ENCODE measurements at regions of chr9 and their contacts with region 1.

Region 1: GRCh38 chr9:132249123-132249522 is 87.3 kb downstream of the NTNG2 start:
- DNase-seq: no peak
- ATAC-seq: no peak
- H3K4me3 Mint-ChIP-seq: no peak overlapping the region
- H3K27ac Mint-ChIP-seq: no peak overlapping the region
- H3K4me1 Mint-ChIP-seq: peaks cover 5% of the 10 kb centered on the region
- H3K27me3 Mint-ChIP-seq: no peaks in the 10 kb centered on the region
- CTCF ChIP-seq: no peak

Region 2: DNA sequence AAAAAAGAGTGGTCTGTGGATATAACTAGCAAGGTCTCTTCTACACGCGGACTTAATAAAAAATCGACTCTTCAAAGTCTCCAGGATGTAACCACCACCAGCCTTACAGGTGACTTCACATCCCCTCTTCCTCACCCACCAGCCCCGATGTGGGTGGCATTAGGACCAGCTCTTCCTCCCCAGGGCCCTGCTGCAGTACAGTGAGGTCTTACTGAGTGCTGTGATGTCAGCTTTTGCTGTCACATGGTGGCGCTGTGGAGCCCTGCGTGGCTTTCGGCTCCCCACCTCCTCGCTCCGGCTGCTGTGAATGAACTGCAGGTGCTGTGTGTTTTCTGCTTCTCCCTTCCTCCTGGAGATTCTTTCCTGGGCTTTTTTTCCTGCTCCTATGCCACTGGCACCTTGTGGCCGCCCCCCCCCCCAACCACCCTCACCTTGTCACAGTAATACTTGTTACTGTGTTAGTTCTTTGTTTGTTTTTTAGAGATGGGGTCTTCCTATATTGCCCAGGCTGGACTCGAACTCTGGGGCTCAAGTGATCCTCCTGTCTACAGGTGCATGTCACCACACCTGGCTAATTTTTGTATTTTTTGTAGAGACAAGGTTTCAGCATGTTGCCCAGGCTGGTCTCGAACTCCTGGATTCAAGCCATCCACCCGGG is 493.5 kb before region 1 on chr9:
- CTCF ChIA-PET with region 1: interaction called, 27 read pairs
- POLR2A ChIA-PET with region 1: interaction called, 14 read pairs
- intact Hi-C with region 1: no loop called
- DNase-seq: peak; percentile 77
- ATAC-seq: peak; percentile 100
- H3K4me3 Mint-ChIP-seq: no peak overlapping the region
- H3K27ac Mint-ChIP-seq: peak overlapping the region; percentile 32
- H3K4me1 Mint-ChIP-seq: peaks cover 5% of the 10 kb centered on the region
- H3K27me3 Mint-ChIP-seq: peaks cover 7% of the 10 kb centered on the region
- CTCF ChIP-seq: no peak

Region 3: DNA sequence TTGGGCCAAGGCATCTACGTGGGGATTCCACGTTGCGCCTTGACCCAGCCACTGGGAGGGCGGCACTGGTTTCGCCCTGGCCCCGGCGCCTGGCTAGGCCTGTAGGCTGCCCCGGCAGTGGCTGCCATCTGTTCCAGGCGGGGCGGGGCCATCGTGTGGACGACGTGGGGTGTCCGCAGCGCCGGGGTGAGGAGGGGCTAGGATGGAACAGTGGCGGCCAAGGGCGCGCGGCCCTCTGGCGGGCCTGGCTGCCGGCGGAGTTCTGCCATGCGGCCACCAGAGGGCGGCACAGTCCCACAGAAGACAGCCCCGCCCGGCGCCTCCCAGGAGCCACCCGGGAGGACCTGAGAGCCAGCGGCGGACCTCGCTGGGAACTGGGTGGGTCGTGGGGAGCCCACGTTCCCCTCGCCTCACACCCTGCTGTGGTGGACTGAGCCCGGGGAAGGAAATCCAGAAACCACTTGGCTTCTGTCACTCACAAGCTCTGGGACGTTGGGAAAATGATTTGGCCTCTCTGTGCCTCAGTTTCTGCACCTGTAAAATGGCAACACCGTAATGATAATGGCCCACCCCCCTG is 486.7 kb before region 1 on chr9:
- CTCF ChIA-PET with region 1: interaction called, 58 read pairs
- POLR2A ChIA-PET with region 1: interaction called, 14 read pairs
- intact Hi-C with region 1: loop called (anchors 1 kb)
- DNase-seq: peak; percentile 79
- ATAC-seq: peak; percentile 98
- H3K4me3 Mint-ChIP-seq: no peak overlapping the region
- H3K27ac Mint-ChIP-seq: no peak overlapping the region
- H3K4me1 Mint-ChIP-seq: no peaks in the 10 kb centered on the region
- H3K27me3 Mint-ChIP-seq: peaks cover 15% of the 10 kb centered on the region
- CTCF ChIP-seq: peak; percentile 66

Region 4: DNA sequence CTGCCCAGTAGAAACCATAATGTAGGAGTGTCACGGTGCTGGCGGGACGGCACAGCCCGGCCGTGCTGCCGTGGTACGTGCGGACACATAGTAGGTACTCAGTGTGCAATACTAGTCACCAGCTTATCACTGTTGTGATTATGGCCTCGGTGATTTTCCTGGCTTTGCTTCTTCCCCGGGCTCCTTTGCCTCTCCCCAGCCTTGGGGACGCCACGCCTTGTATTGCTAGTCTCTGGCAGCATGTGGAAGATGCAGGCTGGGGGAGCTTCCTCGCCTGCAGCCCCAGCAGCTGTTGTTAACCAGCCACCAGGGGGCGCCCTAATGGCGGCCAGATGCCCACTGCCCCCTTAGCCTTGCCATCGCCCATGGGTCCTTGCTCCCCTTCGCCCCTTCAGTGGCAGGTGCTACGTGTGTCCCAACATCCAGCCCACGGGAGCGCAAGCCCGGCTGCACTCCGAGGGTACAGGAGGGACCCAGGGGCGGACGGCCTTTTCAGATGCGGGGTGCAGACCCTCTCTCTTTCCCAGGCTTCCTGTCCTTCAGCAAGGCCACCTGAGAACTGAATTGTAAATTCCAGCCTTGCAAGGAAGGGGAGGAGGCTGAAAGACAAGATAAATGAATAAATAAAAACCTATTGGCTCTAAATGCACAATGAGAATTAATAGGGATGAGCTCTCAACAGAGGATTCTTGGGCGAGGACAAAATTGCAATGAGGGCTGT is 79.3 kb before region 1 on chr9:
- CTCF ChIA-PET with region 1: interaction called, 52 read pairs
- POLR2A ChIA-PET with region 1: no interaction called
- intact Hi-C with region 1: loop called (anchors 1 kb)
- DNase-seq: peak; percentile 59
- ATAC-seq: peak; percentile 54
- H3K4me3 Mint-ChIP-seq: no peak overlapping the region
- H3K27ac Mint-ChIP-seq: no peak overlapping the region
- H3K4me1 Mint-ChIP-seq: no peaks in the 10 kb centered on the region
- H3K27me3 Mint-ChIP-seq: peaks cover 52% of the 10 kb centered on the region
- CTCF ChIP-seq: peak; percentile 53

Region 5: DNA sequence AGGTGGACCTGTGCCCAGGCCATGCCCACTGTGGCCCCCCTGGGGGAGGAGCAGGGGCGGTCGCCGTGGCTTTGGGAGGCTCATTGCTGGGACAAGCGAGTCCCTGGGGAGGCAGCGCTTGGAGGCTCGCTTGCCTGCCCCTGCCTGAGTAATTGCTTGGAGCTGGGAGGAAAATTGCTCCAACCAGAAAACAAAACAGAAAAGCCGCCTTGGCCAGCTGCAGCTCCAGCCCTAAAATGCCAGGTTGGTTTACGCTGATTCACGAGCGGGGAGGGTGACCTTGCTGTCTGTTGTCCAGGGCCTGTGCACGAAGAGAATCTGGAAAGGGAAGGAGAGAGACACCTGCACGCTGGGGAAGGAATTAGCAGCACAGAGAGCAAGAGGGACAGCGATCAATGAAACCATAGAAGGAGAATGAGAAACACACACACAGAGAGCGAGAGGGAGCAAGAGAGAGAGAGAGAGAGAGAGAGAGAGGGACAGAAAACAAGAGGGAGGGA is 62.0 kb before region 1 on chr9:
- CTCF ChIA-PET with region 1: no interaction called
- POLR2A ChIA-PET with region 1: no interaction called
- intact Hi-C with region 1: no loop called
- DNase-seq: no peak
- ATAC-seq: no peak
- H3K4me3 Mint-ChIP-seq: no peak overlapping the region
- H3K27ac Mint-ChIP-seq: no peak overlapping the region
- H3K4me1 Mint-ChIP-seq: peaks cover 5% of the 10 kb centered on the region
- H3K27me3 Mint-ChIP-seq: peaks cover 25% of the 10 kb centered on the region
- CTCF ChIP-seq: no peak